ENCODE measurements at regions of chr1 and their contacts with region 1.

Region 1: DNA sequence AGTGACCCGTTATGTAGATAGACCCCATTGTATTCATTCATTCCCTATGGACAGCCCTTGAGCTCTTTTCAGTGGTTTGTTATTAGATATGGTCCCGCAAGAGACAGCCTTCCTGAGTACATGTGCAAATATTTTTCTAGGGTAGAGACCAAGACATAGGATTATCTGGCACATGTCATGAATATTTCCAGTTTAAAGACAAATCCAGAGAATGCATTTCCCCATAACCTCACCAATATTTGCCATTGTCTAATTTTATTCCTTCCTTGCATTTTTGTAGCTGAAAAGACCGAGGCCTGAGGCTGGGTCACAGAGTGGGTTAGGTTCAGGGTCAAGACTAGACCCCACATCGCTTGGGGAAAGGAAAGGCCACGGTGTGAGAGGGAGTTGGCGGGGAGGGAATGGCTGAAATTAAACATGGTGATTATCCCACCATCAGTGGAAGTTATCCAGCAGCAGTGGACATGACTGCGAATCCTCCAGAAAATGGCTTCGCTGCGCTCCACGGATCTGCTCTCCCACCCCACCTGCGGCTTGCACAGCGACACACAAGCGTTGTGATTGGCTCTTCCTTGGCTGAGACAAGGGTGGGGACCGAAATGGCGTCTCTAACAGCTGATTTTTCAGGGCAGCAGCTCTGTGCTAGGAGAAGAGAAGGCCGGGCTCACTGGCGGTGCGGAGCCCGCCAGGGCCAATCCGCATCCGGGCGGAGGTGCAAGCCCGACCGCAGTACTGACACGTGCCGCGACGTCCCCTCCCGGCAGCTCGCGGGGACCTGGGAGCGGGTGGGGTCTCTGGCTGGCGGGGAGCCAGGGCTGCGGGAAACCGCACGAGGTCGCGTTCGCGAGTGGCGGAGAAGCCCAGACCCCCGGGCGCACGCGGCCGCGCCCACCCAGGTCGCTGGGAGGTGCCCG is 16.1 kb upstream of the STMN1 start:
- DNase-seq: no peak
- H3K4me3 ChIP-seq: peak overlapping the region; percentile 46 to 69 (median 58)
- H3K27ac ChIP-seq: no peak overlapping the region
- H3K4me1 ChIP-seq: peaks cover 6 to 20% (median 13%) of the 10 kb centered on the region in 4 experiments
- H3K27me3 ChIP-seq: peaks cover 0 to 6% (median 2%) of the 10 kb centered on the region in 4 experiments; a peak in 4 of 7 replicates
- CTCF ChIP-seq: no peak
- EP300 ChIP-seq: no peak
- POLR2A ChIP-seq: peak in 1 of 2 experiments; percentile 15; a peak in 1 of 3 replicates
- RAD21 ChIP-seq: no peak

Region 2: DNA sequence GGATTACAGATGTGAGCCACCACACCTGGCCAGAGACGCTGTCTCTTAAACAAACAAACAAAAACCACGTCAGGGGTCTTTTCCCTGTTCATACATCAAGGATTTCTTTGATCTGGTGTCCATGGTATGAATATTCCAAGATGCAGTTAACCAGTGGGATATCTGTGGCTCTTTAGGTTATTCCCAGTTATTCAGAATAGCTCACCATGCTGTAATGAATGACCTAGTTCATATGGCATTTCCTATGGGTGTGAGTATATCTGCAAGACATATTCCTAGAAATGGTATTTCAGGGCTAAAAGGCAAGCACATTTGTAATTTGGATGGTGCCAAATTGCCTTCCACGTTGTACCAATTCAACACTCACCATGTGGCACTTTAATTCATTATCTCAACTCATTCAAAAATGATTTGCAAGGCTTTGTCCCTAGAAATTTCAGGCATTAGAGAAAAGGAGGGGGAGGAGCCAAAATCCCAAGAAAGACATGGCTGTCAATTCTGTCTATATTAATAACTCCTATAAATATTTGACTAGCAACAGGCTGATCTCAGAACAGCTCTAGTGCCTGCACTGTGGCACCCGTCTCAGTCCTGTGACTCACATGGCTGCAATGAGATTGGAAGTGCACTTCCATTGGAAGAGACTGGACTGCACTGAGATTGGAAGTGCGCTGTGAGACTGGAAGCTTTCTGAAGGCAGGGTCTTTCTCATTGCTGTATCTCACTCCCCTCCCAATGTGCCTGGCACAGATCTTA is 10.1 kb before region 1 on chr1:
- CTCF ChIA-PET with region 1: interaction called, 12 read pairs
- POLR2A ChIA-PET with region 1: interaction called, 33 read pairs
- DNase-seq: no peak
- H3K4me3 ChIP-seq: no peak overlapping the region
- H3K27ac ChIP-seq: no peak overlapping the region
- H3K4me1 ChIP-seq: peaks cover 0 to 2% (median under 1%) of the 10 kb centered on the region in 4 experiments; a peak in 2 of 7 replicates
- H3K27me3 ChIP-seq: no peaks in the 10 kb centered on the region
- CTCF ChIP-seq: no peak
- EP300 ChIP-seq: no peak
- POLR2A ChIP-seq: no peak
- RAD21 ChIP-seq: no peak

Region 3: DNA sequence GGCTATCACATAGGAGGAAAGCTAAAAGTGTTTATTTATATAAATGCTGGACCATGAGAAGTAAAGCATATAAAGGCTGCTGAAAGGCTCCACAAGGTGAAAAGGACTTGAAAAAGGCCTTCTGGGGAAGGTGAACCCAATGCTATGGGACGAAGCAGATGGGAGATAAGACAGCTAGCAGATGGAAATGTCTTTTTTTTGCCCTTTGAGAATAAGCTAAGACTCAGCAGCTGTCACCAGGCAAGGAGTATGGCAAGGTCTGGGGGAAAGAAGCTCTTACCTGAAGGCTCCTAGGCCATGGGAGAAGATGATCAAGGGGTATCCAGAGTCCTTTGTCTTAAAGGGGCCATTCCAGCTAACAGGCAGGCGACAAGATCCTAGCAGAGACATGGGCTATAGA is 65.6 kb after region 1 on chr1:
- CTCF ChIA-PET with region 1: no interaction called
- POLR2A ChIA-PET with region 1: no interaction called
- DNase-seq: no peak
- H3K4me3 ChIP-seq: no peak overlapping the region
- H3K27ac ChIP-seq: no peak overlapping the region
- H3K4me1 ChIP-seq: peaks cover 0 to 3% (median 0%) of the 10 kb centered on the region in 4 experiments; a peak in 2 of 7 replicates
- H3K27me3 ChIP-seq: no peaks in the 10 kb centered on the region; a peak in 1 of 7 replicates
- CTCF ChIP-seq: no peak
- EP300 ChIP-seq: no peak
- POLR2A ChIP-seq: no peak
- RAD21 ChIP-seq: no peak

Measured in H1 (cell line).